ENCODE measurements at regions of chr14 and their contacts with region 1.

Region 1: GRCh38 chr14:94227029-94227428 is 52.9 kb downstream of the PPP4R4 start:
- DNase-seq: no peak
- ATAC-seq: no peak

Region 2: GRCh38 chr14:94295360-94296180 is 68.5 kb after region 1 on chr14:
- intact Hi-C with region 1: loop called (anchors 2 kb)
- DNase-seq: no peak
- ATAC-seq: no peak